Left cardiac atrium (tissue), 4 donors: ENCODE measurements at regions of chr3 and their contacts with region 1.

Region 1: DNA sequence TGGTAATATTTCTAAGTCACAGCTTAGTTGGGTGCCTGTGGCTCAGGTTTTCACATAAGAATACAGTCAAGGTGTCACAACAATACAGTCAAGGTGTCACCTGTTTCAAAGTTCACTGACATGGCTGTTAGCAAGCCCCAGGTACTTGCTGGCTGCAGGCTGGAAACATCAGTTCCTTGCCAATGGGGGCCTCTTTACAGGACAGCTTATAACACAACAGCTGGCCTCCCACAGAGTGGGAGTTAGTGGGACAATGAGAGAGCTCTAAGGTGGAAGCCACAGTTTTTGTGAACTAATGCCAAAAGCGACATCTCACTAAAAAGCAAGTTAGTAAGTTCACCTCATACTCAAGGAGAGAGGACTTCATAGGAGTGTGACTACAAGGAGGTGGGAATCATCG is 45.4 kb downstream of the GPR156 start:
- DNase-seq: no peak
- ATAC-seq: no peak

Region 2: DNA sequence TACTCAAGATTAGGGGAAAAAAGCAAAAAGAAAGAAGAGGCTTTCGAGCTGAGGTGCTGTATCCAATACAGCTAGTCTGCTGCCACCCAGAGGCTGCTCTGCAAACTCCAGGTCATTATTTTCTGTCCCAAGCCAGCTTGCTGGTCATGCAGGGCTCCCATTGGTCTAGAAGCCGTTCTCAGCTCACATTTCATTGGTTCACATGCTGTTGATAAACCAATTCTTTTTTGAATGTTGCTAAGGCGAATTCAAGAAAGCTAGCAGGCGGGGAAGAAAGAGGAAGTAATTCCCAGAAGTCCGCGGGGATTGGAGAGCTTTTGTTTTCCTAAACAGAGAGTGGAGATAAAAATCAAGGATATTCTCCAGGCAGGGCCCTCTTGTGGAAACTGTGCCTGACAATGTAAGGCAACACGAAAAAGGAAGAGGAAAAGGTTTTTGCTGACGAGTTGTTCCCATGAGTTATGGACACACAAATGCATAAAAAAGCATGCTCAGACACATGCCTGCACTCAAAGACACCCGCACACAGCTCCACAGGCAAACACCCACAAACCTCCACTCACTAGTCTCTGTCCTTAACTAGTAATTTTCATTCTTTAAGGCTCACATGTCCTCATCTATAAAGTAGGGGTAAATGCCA is 177.7 kb after region 1 on chr3:
- intact Hi-C with region 1: loop called in 1 of 2 experiments (anchors 5 kb)
- DNase-seq: peak; percentile 88
- ATAC-seq: peak; percentile 75 to 85